ENCODE measurements at regions of chr1 and their contacts with region 1.

Region 1: DNA sequence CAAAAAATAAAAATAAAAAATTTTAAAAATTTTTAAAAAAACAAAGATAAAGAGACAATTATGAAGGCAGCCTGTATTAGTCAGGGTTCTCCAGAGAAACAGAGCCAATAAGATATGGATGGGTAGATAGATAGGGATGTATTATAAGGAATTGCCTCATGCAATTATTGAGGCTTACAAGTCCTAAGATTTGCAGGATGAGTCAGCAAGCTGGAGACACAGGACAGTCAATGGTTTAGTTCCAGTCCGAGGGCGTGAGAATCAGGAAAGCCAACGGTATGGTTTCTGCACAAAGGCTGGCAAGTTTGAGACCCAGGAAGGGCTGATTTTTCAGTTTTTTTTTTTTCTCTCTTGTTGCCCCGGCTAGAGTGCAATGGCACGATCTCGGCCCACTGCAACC is 24.1 kb upstream of the EIF4G3 start:
- DNase-seq: no peak
- H3K4me3 ChIP-seq: no peak overlapping the region
- H3K27ac ChIP-seq: peak overlapping the region in 1 of 2 experiments; percentile 73; a peak in 2 of 4 replicates
- H3K4me1 ChIP-seq: peaks cover 0 to 4% of the 10 kb centered on the region in 2 experiments; a peak in 2 of 4 replicates
- H3K27me3 ChIP-seq: no peaks in the 10 kb centered on the region
- CTCF ChIP-seq: no peak
- EP300 ChIP-seq: no peak
- RAD21 ChIP-seq: no peak

Region 2: GRCh38 chr1:20696397-20697329 is 504.1 kb before region 1 on chr1:
- CTCF ChIA-PET with region 1: interaction called, 127 read pairs
- POLR2A ChIA-PET with region 1: interaction called, 6 read pairs
- DNase-seq: peak; percentile 96
- H3K4me3 ChIP-seq: peak overlapping the region; percentile 49 to 70
- H3K27ac ChIP-seq: peak overlapping the region; percentile 56 to 95
- H3K4me1 ChIP-seq: peaks cover 3 to 21% of the 10 kb centered on the region in 2 experiments; a peak in 3 of 4 replicates
- H3K27me3 ChIP-seq: no peaks in the 10 kb centered on the region
- CTCF ChIP-seq: peak; percentile 86
- EP300 ChIP-seq: no peak
- RAD21 ChIP-seq: peak; percentile 89

Region 3: GRCh38 chr1:20792196-20792595 is 408.6 kb before region 1 on chr1:
- CTCF ChIA-PET with region 1: interaction called, 13 read pairs
- POLR2A ChIA-PET with region 1: no interaction called
- DNase-seq: no peak
- H3K4me3 ChIP-seq: no peak overlapping the region
- H3K27ac ChIP-seq: peak overlapping the region in 1 of 2 experiments; percentile 54; a peak in 1 of 4 replicates
- H3K4me1 ChIP-seq: 0 out of 4 replicates have a peak, but pooled peaks cover 0 to 6% of the 10 kb centered on the region in 2 experiments
- H3K27me3 ChIP-seq: no peaks in the 10 kb centered on the region
- CTCF ChIP-seq: no peak
- EP300 ChIP-seq: 0 out of 4 replicates have a peak, but pooled peaks of 1 of the 2 experiments have one; percentile 11
- RAD21 ChIP-seq: no peak

Region 4: GRCh38 chr1:20992322-20993056 is 208.3 kb before region 1 on chr1:
- CTCF ChIA-PET with region 1: interaction called, 16 read pairs
- POLR2A ChIA-PET with region 1: no interaction called
- DNase-seq: no peak
- H3K4me3 ChIP-seq: no peak overlapping the region
- H3K27ac ChIP-seq: peak overlapping the region in 1 of 2 experiments; percentile 27; a peak in 2 of 4 replicates
- H3K4me1 ChIP-seq: peaks cover 8 to 25% of the 10 kb centered on the region in 2 experiments
- H3K27me3 ChIP-seq: no peaks in the 10 kb centered on the region
- CTCF ChIP-seq: no peak
- EP300 ChIP-seq: no peak
- RAD21 ChIP-seq: no peak

Region 5: GRCh38 chr1:21216835-21217811 is 16.4 kb after region 1 on chr1:
- CTCF ChIA-PET with region 1: interaction called, 21 read pairs
- POLR2A ChIA-PET with region 1: no interaction called
- DNase-seq: peak; percentile 67
- H3K4me3 ChIP-seq: no peak overlapping the region; a peak in 1 of 4 replicates
- H3K27ac ChIP-seq: no peak overlapping the region; a peak in 1 of 4 replicates
- H3K4me1 ChIP-seq: peaks cover 0 to 13% of the 10 kb centered on the region in 2 experiments; a peak in 1 of 4 replicates
- H3K27me3 ChIP-seq: no peaks in the 10 kb centered on the region
- CTCF ChIP-seq: peak; percentile 86
- EP300 ChIP-seq: no peak
- RAD21 ChIP-seq: peak; percentile 52

Region 6: GRCh38 chr1:21344750-21345443 is 144.1 kb after region 1 on chr1:
- CTCF ChIA-PET with region 1: no interaction called
- POLR2A ChIA-PET with region 1: no interaction called
- DNase-seq: peak; percentile 60
- H3K4me3 ChIP-seq: peak overlapping the region; percentile 73 to 78
- H3K27ac ChIP-seq: peak overlapping the region in 1 of 2 experiments; percentile 65; a peak in 1 of 4 replicates
- H3K4me1 ChIP-seq: peaks cover 0 to 48% of the 10 kb centered on the region in 2 experiments; a peak in 1 of 4 replicates
- H3K27me3 ChIP-seq: no peaks in the 10 kb centered on the region; the same call in 1 of the 2 replicates
- CTCF ChIP-seq: no peak
- EP300 ChIP-seq: no peak
- RAD21 ChIP-seq: no peak